ENCODE measurements at regions of chr3 and their contacts with region 1.

Region 1: DNA sequence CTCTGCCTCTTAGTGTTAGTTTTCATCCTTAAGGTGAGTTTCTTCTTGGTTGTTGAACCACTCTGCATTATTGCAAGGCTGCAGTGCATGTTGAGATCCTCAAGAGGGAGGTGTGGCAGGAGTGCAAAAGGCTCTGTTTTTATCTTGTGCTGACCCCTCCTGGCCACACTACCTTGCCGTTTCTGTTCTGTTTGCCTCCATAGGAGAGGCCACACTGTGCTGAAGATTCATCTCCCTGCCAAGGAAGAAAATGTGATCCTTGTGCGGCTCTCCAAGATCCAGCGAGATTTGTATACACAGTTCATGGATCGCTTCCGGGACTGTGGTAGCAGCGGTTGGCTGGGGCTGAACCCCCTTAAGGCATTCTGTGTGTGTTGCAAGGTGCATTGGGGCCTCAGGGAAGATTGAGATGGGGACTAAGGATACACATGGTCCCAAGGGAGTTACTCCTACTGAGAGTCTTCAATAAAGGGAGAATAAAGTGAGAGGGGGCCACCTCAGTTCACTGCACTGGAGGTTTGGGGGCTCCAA is 33.0 kb upstream of the TEX264 start:
- DNase-seq: peak; percentile 58 to 67
- H3K4me3 ChIP-seq: no peak overlapping the region
- H3K27ac ChIP-seq: no peak overlapping the region
- H3K4me1 ChIP-seq: no peaks in the 10 kb centered on the region
- H3K27me3 ChIP-seq: no peaks in the 10 kb centered on the region
- CTCF ChIP-seq: peak; percentile 82 to 100 (median 100)
- EP300 ChIP-seq: no peak
- POLR2A ChIP-seq: no peak
- RAD21 ChIP-seq: peak; percentile 84

Region 2: GRCh38 chr3:51622868-51623267 is 15.1 kb before region 1 on chr3:
- CTCF ChIA-PET with region 1: interaction called, 13 read pairs
- POLR2A ChIA-PET with region 1: no interaction called
- DNase-seq: no peak
- H3K4me3 ChIP-seq: no peak overlapping the region
- H3K27ac ChIP-seq: no peak overlapping the region; the same call in 1 of the 2 replicates
- H3K4me1 ChIP-seq: peaks cover 0 to 5% (median 0%) of the 10 kb centered on the region in 4 experiments; a peak in 2 of 7 replicates
- H3K27me3 ChIP-seq: no peaks in the 10 kb centered on the region
- CTCF ChIP-seq: no peak
- EP300 ChIP-seq: no peak
- POLR2A ChIP-seq: no peak
- RAD21 ChIP-seq: no peak